BJ (cell line): ENCODE measurements at regions of chr2 and their contacts with region 1.

Region 1: DNA sequence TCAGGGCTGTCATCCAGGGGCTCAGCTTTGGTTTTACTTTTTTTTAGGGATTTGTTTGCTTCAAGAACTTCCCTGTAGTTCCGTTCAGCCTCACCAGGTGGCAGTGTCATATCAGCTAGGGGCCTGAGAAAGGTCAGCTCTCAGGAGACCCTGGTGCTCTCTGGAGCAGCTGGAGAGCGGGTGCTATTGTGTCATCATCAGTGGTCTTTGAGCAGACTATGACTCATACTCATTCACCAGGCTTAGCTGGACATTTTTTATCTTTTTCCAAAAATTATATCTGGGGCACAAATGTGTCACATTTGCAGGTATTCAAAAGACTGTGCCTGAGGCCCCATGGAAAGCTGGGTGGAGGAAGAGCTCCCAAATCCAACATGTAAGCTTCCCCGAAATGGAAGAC is 24.4 kb downstream of the ZNF892 start:
- DNase-seq: peak; percentile 31
- H3K4me3 ChIP-seq: no peak overlapping the region
- H3K27me3 ChIP-seq: 0 out of 2 replicates have a peak, but pooled peaks cover 2% of the 10 kb centered on the region
- CTCF ChIP-seq: peak; percentile 94

Region 2: GRCh38 chr2:95207111-95207961 is 24.4 kb before region 1 on chr2 and contains the start of gene ZNF892:
- CTCF ChIA-PET with region 1: interaction called, 11 read pairs
- POLR2A ChIA-PET with region 1: no interaction called
- DNase-seq: peak; percentile 44
- H3K4me3 ChIP-seq: peak within 1 kb of the TSS; percentile 77
- H3K27me3 ChIP-seq: no peaks in the 10 kb centered on the region
- CTCF ChIP-seq: peak; percentile 42; the same call in 1 of the 2 replicates
- polyA plus RNA-seq, gene ZNF892: 0.71 and 1.5 TPM in 2 replicates

Region 3: DNA sequence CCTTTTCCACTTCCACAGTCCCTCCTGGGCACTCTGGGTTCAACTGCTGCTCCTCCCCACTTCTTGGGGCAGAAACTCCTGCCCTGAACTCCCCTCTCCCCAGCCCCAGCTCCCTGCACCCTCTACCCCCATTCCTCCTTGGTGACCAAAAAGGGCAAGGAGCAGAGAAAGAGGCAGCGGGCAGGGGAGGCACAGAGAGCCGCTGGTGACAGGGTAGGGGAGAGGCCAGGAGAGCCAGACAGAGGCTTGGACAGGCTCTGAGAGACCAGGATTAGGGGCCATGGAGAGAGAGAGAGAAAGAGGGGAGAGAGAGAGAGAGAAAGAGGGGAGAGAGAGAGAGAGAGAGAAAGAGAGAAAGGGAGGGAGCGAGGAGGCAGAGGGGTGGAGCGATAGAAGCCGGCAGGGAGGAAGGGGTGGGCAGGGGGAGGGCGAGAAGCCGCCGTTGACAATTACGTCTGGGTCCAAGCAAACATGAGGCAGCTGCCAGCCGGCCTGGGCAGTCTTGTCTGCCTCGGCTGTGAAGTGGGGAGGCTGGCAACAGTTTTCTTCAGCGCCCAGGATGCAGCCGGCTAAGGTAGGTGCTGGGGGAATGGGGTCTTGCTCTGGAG is 65.3 kb after region 1 on chr2 and contains the start of gene KCNIP3:
- CTCF ChIA-PET with region 1: interaction called, 16 read pairs
- POLR2A ChIA-PET with region 1: no interaction called
- DNase-seq: no peak
- H3K4me3 ChIP-seq: no peak within 1 kb of the TSS
- H3K27me3 ChIP-seq: peaks cover 10% of the 10 kb centered on the region; the same call in 1 of the 2 replicates
- CTCF ChIP-seq: no peak
- polyA plus RNA-seq, gene KCNIP3: 3.1 and 4.1 TPM in 2 replicates

Region 4: DNA sequence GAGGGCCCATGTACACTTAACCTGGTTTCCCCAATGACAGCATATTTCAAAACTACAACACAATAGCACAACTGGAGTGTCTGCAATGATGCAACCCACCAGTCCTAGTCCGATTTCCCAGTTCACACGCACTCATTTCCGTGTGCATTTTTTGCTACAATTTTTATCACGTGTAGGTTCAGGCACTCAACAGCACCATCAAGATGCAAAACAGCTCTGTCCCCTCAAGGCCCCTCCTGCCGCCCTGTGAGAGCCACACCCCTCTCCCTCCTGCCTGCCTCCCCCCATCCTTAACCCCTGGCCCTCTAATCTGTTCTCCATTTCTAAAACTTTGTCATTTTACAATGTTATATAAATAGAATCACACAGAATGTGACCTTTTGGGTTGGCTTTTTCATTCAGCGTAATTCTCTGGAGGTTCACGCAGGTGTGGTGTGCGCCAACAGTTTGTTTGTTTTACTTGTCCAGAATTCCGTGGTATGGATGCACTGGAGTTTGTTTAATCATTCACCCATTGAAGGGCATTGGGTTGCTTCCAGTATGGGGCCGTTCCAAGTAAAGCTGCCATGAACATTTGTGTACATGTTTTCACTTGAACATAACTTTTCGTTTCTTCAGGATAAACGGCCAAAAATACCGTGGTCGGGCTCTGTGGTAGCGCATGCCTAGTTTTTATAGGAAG is 73.8 kb after region 1 on chr2:
- CTCF ChIA-PET with region 1: interaction called, 17 read pairs
- POLR2A ChIA-PET with region 1: no interaction called
- DNase-seq: no peak
- H3K4me3 ChIP-seq: no peak overlapping the region
- H3K27me3 ChIP-seq: peaks cover 5% of the 10 kb centered on the region; the same call in 1 of the 2 replicates
- CTCF ChIP-seq: no peak

Region 5: DNA sequence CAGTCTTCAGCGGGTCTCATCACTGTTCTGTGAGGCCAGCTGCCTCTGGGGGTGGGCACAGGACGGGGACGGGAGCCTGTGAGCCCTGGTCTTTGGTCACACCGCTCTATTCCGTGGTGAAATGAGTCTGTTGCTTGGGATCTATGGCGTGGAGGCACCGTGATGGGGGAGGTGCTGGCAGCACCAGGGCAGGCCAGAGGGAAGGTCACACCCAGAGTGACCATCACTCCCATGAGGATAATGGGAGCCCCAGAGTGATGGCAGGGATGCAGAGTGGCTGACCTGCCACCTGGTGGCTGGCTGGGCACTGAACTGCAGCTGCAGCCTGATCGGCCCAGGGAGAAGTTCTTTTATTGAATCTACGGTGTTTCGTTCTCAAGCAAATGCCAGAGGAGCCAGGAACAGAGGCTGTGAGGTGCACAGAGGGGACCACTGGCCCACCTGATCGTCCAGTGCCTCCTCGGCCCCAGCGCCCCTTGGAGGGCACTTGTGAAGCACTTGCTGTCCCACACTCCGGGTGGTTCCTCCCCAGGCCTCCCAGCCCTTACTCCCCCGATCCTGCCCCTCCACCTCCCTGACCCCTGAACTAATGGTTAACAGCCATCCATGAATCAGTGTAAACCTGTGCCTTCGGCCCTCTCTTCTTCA is 83.4 kb after region 1 on chr2:
- CTCF ChIA-PET with region 1: interaction called, 108 read pairs
- POLR2A ChIA-PET with region 1: no interaction called
- DNase-seq: no peak
- H3K4me3 ChIP-seq: no peak overlapping the region
- H3K27me3 ChIP-seq: no peaks in the 10 kb centered on the region; the same call in 1 of the 2 replicates
- CTCF ChIP-seq: peak; percentile 76

Region 6: DNA sequence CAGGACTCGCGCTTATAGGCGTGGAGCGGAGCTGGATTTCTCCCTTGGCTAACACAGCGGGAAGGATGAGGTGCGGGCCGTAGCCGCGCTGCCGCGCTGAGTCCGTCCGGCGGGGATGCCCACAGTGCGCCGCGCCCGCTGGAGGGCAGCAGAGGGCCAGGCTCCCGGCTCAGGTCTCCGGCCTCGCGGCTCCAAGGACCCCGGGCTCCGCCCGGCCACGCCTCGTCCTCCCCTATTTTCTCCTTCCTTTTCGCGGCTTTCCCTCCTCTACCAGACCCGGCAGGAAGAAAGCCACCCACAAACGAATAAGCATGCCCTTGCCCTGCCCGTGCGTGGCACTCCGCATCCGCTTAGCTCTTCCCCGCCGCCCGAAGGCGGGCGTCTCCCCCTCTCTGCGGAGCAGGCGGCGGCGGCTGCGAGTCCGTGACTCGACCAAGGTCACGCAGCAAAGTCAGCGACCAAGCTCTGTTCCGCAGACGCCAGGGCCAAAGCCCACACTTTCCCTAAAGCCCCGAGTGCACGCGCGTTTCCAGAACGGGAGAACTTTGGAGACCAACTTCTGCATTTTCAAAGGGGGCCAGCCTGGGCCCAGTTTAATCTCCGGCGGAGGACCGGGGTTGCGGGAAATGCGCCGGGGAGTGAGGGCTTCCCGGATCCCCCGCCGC is 114.0 kb after region 1 on chr2:
- CTCF ChIA-PET with region 1: interaction called, 38 read pairs
- POLR2A ChIA-PET with region 1: no interaction called
- DNase-seq: peak; percentile 29
- H3K4me3 ChIP-seq: peak overlapping the region; percentile 65
- H3K27me3 ChIP-seq: peaks cover 1% of the 10 kb centered on the region
- CTCF ChIP-seq: peak; percentile 79